Activated naive CD4-positive, alpha-beta T cell treated with anti-CD3 and anti-CD28 coated beads for 36 hours (primary cell): ENCODE measurements at regions of chr13 and their contacts with region 1.

Region 1: GRCh38 chr13:30306762-30307193 is 573 bp downstream of the KATNAL1 start:
- DNase-seq: peak; percentile 94
- H3K4me3 Mint-ChIP-seq: peak overlapping the region; percentile 83
- H3K27ac Mint-ChIP-seq: peak overlapping the region; percentile 76
- H3K4me1 Mint-ChIP-seq: peaks cover 14% of the 10 kb centered on the region
- H3K27me3 Mint-ChIP-seq: no peaks in the 10 kb centered on the region

Region 2: DNA sequence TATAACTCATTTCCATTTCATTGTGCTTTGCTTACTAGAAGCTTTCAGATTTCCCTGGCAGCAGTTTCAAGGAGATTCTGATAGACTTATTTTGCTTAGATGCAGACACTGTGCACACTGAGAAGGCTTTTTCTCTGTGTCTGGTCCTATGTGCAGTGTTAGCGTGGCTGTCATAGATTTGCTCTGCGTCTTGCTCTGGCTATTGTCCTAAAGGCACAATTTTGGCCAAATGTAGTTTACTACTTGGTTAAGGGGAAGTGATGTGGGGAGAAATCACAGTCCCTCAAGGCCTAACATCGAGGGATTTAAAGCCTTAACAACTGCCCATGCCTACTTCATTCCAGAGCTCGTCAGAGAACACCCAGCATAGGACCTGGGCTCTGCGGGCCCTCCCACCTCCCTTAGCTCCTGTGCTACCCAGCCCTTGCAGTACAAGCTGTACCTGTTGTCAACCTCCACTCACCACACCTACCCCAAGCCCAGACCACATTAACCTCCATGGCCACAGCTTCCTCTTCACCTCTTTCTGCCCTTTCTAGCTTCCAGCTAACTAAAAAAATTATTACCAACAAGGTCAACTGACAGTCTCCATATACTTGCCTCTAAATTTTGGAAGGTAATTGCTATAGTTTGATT is 39.5 kb after region 1 on chr13:
- CTCF ChIA-PET with region 1: no interaction called
- intact Hi-C with region 1: loop called (anchors 1 kb)
- DNase-seq: peak; percentile 71
- H3K4me3 Mint-ChIP-seq: no peak overlapping the region
- H3K27ac Mint-ChIP-seq: no peak overlapping the region
- H3K4me1 Mint-ChIP-seq: peaks cover 37% of the 10 kb centered on the region
- H3K27me3 Mint-ChIP-seq: peaks cover 2% of the 10 kb centered on the region

Region 3: GRCh38 chr13:30395192-30396084 is 88.7 kb after region 1 on chr13:
- CTCF ChIA-PET with region 1: no interaction called
- intact Hi-C with region 1: loop called (anchors 2 kb)
- DNase-seq: peak; percentile 88
- H3K4me3 Mint-ChIP-seq: peak overlapping the region; percentile 85
- H3K27ac Mint-ChIP-seq: peak overlapping the region; percentile 94
- H3K4me1 Mint-ChIP-seq: peaks cover 23% of the 10 kb centered on the region
- H3K27me3 Mint-ChIP-seq: no peaks in the 10 kb centered on the region

Region 4: DNA sequence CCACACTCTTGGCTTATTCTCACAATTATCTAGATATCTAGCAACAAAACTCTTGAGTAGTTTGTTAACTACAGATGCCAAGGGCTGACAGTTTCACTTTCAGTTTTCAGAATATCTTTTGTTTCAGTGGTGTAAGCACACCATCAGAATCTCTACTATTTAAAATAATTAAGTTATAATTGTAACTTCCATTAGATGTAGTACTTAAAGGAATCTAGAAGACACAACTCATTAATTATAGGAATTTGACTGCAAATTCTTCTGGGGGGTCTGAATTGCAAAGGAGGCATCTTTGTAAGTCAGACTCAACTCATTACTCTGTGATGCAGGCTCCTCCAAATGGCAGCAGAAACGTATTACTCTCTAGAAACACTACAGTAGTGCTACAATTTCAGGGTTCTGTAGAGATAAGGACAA is 266.1 kb after region 1 on chr13:
- CTCF ChIA-PET with region 1: no interaction called
- intact Hi-C with region 1: loop called (anchors 5 kb)
- DNase-seq: peak; percentile 29
- H3K4me3 Mint-ChIP-seq: peak overlapping the region; percentile 41
- H3K27ac Mint-ChIP-seq: peak overlapping the region; percentile 12
- H3K4me1 Mint-ChIP-seq: peaks cover 33% of the 10 kb centered on the region
- H3K27me3 Mint-ChIP-seq: no peaks in the 10 kb centered on the region

Region 5: GRCh38 chr13:31038834-31039552 is 732.2 kb after region 1 on chr13:
- CTCF ChIA-PET with region 1: no interaction called
- intact Hi-C with region 1: no loop called
- DNase-seq: peak; percentile 44
- H3K4me3 Mint-ChIP-seq: no peak overlapping the region
- H3K27ac Mint-ChIP-seq: peak overlapping the region; percentile 2
- H3K4me1 Mint-ChIP-seq: peaks cover 33% of the 10 kb centered on the region
- H3K27me3 Mint-ChIP-seq: no peaks in the 10 kb centered on the region